B cell (primary cell): ENCODE measurements at regions of chr1 and their contacts with region 1.

Region 1: GRCh38 chr1:160653620-160654016 is 6.8 kb upstream of the SLAMF1 start:
- DNase-seq: peak; percentile 58
- ATAC-seq: peak; percentile 76
- H3K4me3 ChIP-seq: peak overlapping the region in 2 of 5 experiments; percentile 25 to 27
- H3K4me3 Mint-ChIP-seq: peak overlapping the region; percentile 84
- H3K27ac ChIP-seq: peak overlapping the region; percentile 63 to 82
- H3K27ac Mint-ChIP-seq: peak overlapping the region; percentile 96
- H3K4me1 ChIP-seq: peaks cover 56 to 80% of the 10 kb centered on the region in 2 donors
- H3K4me1 Mint-ChIP-seq: peaks cover 87% of the 10 kb centered on the region
- H3K27me3 ChIP-seq: no peaks in the 10 kb centered on the region
- H3K27me3 Mint-ChIP-seq: no peaks in the 10 kb centered on the region
- CTCF ChIP-seq: no peak

Region 2: GRCh38 chr1:160550572-160551034 is 103.0 kb before region 1 on chr1:
- CTCF ChIA-PET with region 1: no interaction called
- POLR2A ChIA-PET with region 1: no interaction called
- intact Hi-C with region 1: no loop called
- DNase-seq: no peak
- ATAC-seq: no peak
- H3K4me3 ChIP-seq: no peak overlapping the region
- H3K4me3 Mint-ChIP-seq: peak overlapping the region; percentile 8
- H3K27ac ChIP-seq: peak overlapping the region in 1 of 2 donors; percentile 88
- H3K27ac Mint-ChIP-seq: peak overlapping the region; percentile 94
- H3K4me1 ChIP-seq: peaks cover 65 to 67% of the 10 kb centered on the region in 2 donors
- H3K4me1 Mint-ChIP-seq: peaks cover 81% of the 10 kb centered on the region
- H3K27me3 ChIP-seq: no peaks in the 10 kb centered on the region
- H3K27me3 Mint-ChIP-seq: no peaks in the 10 kb centered on the region
- CTCF ChIP-seq: no peak

Region 3: GRCh38 chr1:160637821-160638539 is 15.6 kb before region 1 on chr1:
- CTCF ChIA-PET with region 1: interaction called, 5 read pairs
- POLR2A ChIA-PET with region 1: no interaction called
- intact Hi-C with region 1: loop called (anchors 1 kb)
- DNase-seq: peak; percentile 79
- ATAC-seq: peak; percentile 49
- H3K4me3 ChIP-seq: peak overlapping the region in 2 of 5 experiments; percentile 17 to 40
- H3K4me3 Mint-ChIP-seq: peak overlapping the region; percentile 65
- H3K27ac ChIP-seq: peak overlapping the region; percentile 72 to 83
- H3K27ac Mint-ChIP-seq: peak overlapping the region; percentile 88
- H3K4me1 ChIP-seq: peaks cover 70 to 82% of the 10 kb centered on the region in 2 donors
- H3K4me1 Mint-ChIP-seq: peaks cover 82% of the 10 kb centered on the region
- H3K27me3 ChIP-seq: no peaks in the 10 kb centered on the region
- H3K27me3 Mint-ChIP-seq: no peaks in the 10 kb centered on the region
- CTCF ChIP-seq: no peak

Region 4: GRCh38 chr1:160664573-160665051 is 11.0 kb after region 1 on chr1:
- CTCF ChIA-PET with region 1: interaction called, 4 read pairs
- POLR2A ChIA-PET with region 1: interaction called, 3 read pairs
- intact Hi-C with region 1: loop called (anchors 2 kb)
- DNase-seq: peak; percentile 76
- ATAC-seq: peak; percentile 80
- H3K4me3 ChIP-seq: peak overlapping the region in 1 of 5 experiments; percentile 44
- H3K4me3 Mint-ChIP-seq: peak overlapping the region; percentile 71
- H3K27ac ChIP-seq: peak overlapping the region; percentile 48 to 57
- H3K27ac Mint-ChIP-seq: peak overlapping the region; percentile 85
- H3K4me1 ChIP-seq: peaks cover 44 to 46% of the 10 kb centered on the region in 2 donors
- H3K4me1 Mint-ChIP-seq: peaks cover 60% of the 10 kb centered on the region
- H3K27me3 ChIP-seq: no peaks in the 10 kb centered on the region
- H3K27me3 Mint-ChIP-seq: no peaks in the 10 kb centered on the region
- CTCF ChIP-seq: no peak

Region 5: GRCh38 chr1:160739098-160739511 is 85.5 kb after region 1 on chr1 and contains the start of gene SLAMF7:
- CTCF ChIA-PET with region 1: interaction called, 3 read pairs
- POLR2A ChIA-PET with region 1: interaction called, 10 read pairs
- intact Hi-C with region 1: no loop called
- DNase-seq: peak; percentile 75
- ATAC-seq: peak; percentile 92
- H3K4me3 ChIP-seq: peak within 1 kb of the TSS in 4 of 5 experiments; percentile 9 to 50 (median 31)
- H3K4me3 Mint-ChIP-seq: peak within 1 kb of the TSS; percentile 91
- H3K27ac ChIP-seq: peak within 1 kb of the TSS; percentile 41 to 70
- H3K27ac Mint-ChIP-seq: peak within 1 kb of the TSS; percentile 87
- H3K4me1 ChIP-seq: peaks cover 25 to 39% of the 10 kb centered on the region in 2 donors
- H3K4me1 Mint-ChIP-seq: peaks cover 61% of the 10 kb centered on the region
- H3K27me3 ChIP-seq: no peaks in the 10 kb centered on the region
- H3K27me3 Mint-ChIP-seq: no peaks in the 10 kb centered on the region
- CTCF ChIP-seq: no peak
- total RNA-seq, gene SLAMF7: 51.6 and 52.6 TPM in 2 replicates